ENCODE measurements at regions of chr5 and their contacts with region 1.

Region 1: DNA sequence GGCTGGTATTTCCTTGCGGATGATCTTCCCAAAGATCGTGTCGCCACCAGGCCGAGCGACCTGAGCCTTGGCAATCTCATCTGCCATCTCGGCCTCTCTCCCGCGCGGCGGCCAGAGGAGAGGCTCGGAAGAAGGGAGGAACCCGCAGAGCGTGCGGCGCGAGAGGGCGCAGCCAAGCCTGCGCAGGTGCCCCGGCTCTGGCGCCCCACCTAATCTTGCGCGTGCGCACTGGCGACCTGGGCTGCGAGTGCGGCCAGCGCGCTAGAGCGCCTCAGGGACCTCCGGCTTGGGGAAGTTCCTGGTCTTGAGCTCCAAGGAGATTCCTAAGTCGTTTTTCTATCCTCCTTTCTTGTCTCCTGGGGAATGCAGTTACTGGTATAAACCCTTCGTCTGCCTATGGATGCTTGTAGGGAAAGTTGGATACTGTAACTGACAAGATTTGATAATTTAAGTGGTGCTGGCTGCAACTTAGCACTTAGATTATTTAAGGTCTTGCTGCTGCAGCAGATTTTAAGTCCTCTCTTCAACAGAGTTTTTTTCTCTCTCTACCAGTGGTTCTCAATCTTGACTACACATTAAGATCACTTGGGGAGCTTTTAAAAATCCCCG is at the start of gene HINT1:
- DNase-seq: peak; percentile 92
- H3K4me3 ChIP-seq: peak within 1 kb of the TSS; percentile 88 to 93 (median 89)
- H3K27ac ChIP-seq: peak within 1 kb of the TSS; percentile 96
- H3K4me1 ChIP-seq: peaks cover 9% of the 10 kb centered on the region
- H3K27me3 ChIP-seq: no peaks in the 10 kb centered on the region
- CTCF ChIP-seq: peak in 1 of 2 donors; percentile 45
- total RNA-seq, gene HINT1: 167 to 273 TPM

Region 2: GRCh38 chr5:131281133-131281867 is 116.1 kb after region 1 on chr5:
- CTCF ChIA-PET with region 1: no interaction called
- dilution Hi-C with region 1: no loop called
- in situ Hi-C with region 1: loop called in 1 of 2 experiments (anchors 10 kb)
- intact Hi-C with region 1: no loop called
- DNase-seq: no peak
- H3K4me3 ChIP-seq: peak overlapping the region; percentile 5 to 31 (median 26)
- H3K27ac ChIP-seq: peak overlapping the region; percentile 76
- H3K4me1 ChIP-seq: peaks cover 22% of the 10 kb centered on the region
- H3K27me3 ChIP-seq: no peaks in the 10 kb centered on the region
- CTCF ChIP-seq: no peak

Region 3: GRCh38 chr5:131382407-131383395 is 217.5 kb after region 1 on chr5:
- CTCF ChIA-PET with region 1: no interaction called
- dilution Hi-C with region 1: no loop called
- in situ Hi-C with region 1: loop called (anchors 10 to 25 kb)
- intact Hi-C with region 1: loop called (anchors 1 kb)
- DNase-seq: peak; percentile 65
- H3K4me3 ChIP-seq: no peak overlapping the region
- H3K27ac ChIP-seq: no peak overlapping the region
- H3K4me1 ChIP-seq: no peaks in the 10 kb centered on the region
- H3K27me3 ChIP-seq: no peaks in the 10 kb centered on the region
- CTCF ChIP-seq: peak; percentile 71 to 73

Region 4: GRCh38 chr5:131417240-131417869 is 252.1 kb after region 1 on chr5:
- CTCF ChIA-PET with region 1: interaction called, 11 read pairs
- dilution Hi-C with region 1: no loop called
- in situ Hi-C with region 1: no loop called
- intact Hi-C with region 1: loop called (anchors 1 kb)
- DNase-seq: peak; percentile 46
- H3K4me3 ChIP-seq: no peak overlapping the region
- H3K27ac ChIP-seq: no peak overlapping the region
- H3K4me1 ChIP-seq: no peaks in the 10 kb centered on the region
- H3K27me3 ChIP-seq: no peaks in the 10 kb centered on the region
- CTCF ChIP-seq: peak; percentile 77 to 79